ENCODE measurements at regions of chr6 and their contacts with region 1.

Region 1: GRCh38 chr6:112335736-112336135 is 11.4 kb upstream of the RFPL4B start:
- H3K4me3 ChIP-seq: no peak overlapping the region
- H3K27ac ChIP-seq: no peak overlapping the region
- H3K4me1 ChIP-seq: peaks cover 8% of the 10 kb centered on the region; the same call in 1 of the 2 replicates
- CTCF ChIP-seq: no peak

Region 2: GRCh38 chr6:112216699-112217551 is 118.8 kb before region 1 on chr6:
- CTCF ChIA-PET with region 1: no interaction called
- POLR2A ChIA-PET with region 1: no interaction called
- H3K4me3 ChIP-seq: no peak overlapping the region
- H3K27ac ChIP-seq: peak overlapping the region; percentile 48
- H3K4me1 ChIP-seq: peaks cover 41% of the 10 kb centered on the region
- CTCF ChIP-seq: no peak

Region 3: GRCh38 chr6:112311950-112312547 is 23.7 kb before region 1 on chr6:
- CTCF ChIA-PET with region 1: interaction called, 11 read pairs
- POLR2A ChIA-PET with region 1: no interaction called
- H3K4me3 ChIP-seq: no peak overlapping the region
- H3K27ac ChIP-seq: no peak overlapping the region
- H3K4me1 ChIP-seq: no peaks in the 10 kb centered on the region
- CTCF ChIP-seq: 0 out of 2 replicates have a peak, but pooled peaks have one; percentile 10

Region 4: GRCh38 chr6:112409311-112409710 is 73.6 kb after region 1 on chr6:
- CTCF ChIA-PET with region 1: no interaction called
- POLR2A ChIA-PET with region 1: no interaction called
- H3K4me3 ChIP-seq: no peak overlapping the region
- H3K27ac ChIP-seq: no peak overlapping the region
- H3K4me1 ChIP-seq: no peaks in the 10 kb centered on the region
- CTCF ChIP-seq: no peak

Region 5: GRCh38 chr6:112502351-112503090 is 166.8 kb after region 1 on chr6:
- CTCF ChIA-PET with region 1: no interaction called
- POLR2A ChIA-PET with region 1: no interaction called
- H3K4me3 ChIP-seq: no peak overlapping the region
- H3K27ac ChIP-seq: no peak overlapping the region
- H3K4me1 ChIP-seq: peaks cover 3% of the 10 kb centered on the region; the same call in 1 of the 2 replicates
- CTCF ChIP-seq: no peak